Aorta (tissue), 5 donors: ENCODE measurements at regions of chr15 and their contacts with region 1.

Region 1: DNA sequence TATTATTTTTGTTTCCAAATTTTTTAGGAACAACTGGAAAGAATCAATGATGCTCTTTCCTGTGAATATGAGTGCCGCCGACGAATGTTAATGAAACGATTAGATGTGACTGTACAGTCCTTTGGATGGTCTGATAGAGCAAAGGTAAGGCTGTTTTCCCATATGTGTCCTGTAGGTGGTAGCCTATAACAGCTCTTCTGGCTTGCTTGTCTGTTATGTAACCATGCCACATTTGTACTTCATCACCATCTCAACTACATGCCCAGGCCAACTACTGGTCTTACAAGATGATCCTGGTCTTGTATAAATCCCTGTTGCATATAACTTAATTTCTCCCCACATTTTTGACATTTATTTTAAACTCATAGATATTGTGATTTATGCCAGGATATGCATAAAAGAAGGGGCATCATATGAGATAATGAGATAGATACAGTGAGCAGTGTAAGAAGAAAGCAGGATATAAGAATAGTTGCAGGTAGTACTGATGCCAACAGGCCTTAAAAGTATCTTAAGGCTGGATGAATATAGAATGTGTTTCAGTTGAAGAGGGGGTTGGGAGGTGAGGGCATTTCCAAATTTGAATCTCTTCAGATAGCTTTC is 20.3 kb downstream of the FAM98B start:
- DNase-seq: no peak
- ATAC-seq: peak; percentile 90
- H3K4me3 ChIP-seq: no peak overlapping the region
- H3K27ac ChIP-seq: no peak overlapping the region
- H3K4me1 ChIP-seq: no peaks in the 10 kb centered on the region
- H3K27me3 ChIP-seq: no peaks in the 10 kb centered on the region

Region 2: DNA sequence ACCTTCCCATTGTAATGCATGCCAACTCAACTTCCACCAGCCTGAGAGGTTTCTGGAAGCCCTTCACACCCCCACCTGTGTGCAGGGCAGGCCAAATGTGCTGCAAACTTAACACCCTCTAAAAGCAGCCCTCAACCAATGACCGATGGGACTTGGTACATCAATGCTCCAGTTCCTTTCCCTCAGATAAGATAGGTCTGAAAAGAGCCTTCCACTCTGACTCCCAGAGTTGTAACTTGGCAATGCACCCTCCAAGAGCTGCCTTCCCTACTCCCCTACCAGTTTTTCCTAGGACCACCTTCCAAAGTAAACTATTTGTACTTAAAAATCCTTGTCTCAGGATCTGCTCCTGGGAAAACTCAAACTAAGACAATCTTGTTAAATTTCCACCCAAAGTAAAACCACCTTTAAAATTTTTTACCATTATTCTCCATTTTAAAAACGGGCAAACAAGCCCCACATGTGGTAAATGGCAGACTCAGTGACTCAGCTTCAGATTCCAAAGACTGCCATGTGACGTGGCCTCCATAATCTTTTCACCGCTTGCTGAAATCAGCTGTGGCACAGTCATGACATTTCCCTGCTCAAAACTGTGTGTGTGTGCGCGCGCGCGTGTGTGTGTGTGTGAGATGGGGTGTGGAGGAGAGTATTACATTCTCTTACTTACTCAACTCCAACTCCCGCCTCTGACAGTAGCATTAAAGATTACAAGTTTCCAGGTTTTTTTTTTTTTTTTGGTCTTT is 73.2 kb after region 1 on chr15:
- intact Hi-C with region 1: loop called in 1 of 2 experiments (anchors 10 kb)
- DNase-seq: no peak
- ATAC-seq: no peak
- H3K4me3 ChIP-seq: no peak overlapping the region
- H3K27ac ChIP-seq: no peak overlapping the region
- H3K4me1 ChIP-seq: no peaks in the 10 kb centered on the region
- H3K27me3 ChIP-seq: no peaks in the 10 kb centered on the region

Region 3: DNA sequence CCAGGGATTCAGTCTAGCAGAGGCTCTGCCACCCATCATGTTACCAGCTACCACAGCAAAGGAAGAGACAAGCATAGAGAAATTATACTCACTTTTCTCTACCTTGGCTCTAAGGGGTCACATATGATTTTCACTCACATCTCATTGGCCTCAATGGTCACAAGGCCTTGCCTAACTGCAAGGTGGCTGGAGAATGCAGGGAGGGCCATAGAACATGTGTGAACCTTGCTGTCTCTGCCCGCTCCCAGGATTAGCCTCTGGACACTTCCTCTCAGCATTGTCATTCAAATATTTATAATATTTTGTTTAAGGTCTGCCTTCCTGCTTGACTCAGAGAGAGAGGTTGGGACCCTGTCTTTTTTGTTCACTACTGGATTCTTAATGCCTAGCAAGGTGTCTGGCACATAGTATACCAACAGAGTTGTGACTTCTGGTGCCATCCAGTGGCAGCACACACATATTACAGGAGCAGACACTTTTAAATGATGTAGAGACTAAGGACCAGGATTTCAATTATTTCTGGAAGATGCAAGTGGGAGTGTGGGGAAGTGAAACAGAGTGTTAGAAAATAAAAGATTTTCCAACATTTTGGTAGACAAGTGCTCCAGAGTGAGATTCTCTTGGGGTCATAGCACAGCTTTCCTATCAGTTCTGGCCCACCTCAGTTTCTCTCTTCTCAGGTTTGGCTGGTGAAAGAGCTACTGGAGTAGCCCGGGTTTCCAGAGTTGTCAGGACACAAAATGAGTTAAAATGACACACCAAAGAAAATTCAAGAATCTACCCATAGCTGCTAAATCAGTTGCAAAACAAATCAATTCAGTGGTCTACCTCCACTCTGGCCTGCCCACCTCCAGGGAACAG is 209.4 kb after region 1 on chr15:
- intact Hi-C with region 1: loop called in 1 of 2 experiments (anchors 5 kb)
- DNase-seq: peak in 1 of 2 donors; percentile 65
- ATAC-seq: peak; percentile 66
- H3K4me3 ChIP-seq: no peak overlapping the region
- H3K27ac ChIP-seq: no peak overlapping the region
- H3K4me1 ChIP-seq: no peaks in the 10 kb centered on the region
- H3K27me3 ChIP-seq: peaks cover 0 to 2% of the 10 kb centered on the region in 2 donors

Region 4: DNA sequence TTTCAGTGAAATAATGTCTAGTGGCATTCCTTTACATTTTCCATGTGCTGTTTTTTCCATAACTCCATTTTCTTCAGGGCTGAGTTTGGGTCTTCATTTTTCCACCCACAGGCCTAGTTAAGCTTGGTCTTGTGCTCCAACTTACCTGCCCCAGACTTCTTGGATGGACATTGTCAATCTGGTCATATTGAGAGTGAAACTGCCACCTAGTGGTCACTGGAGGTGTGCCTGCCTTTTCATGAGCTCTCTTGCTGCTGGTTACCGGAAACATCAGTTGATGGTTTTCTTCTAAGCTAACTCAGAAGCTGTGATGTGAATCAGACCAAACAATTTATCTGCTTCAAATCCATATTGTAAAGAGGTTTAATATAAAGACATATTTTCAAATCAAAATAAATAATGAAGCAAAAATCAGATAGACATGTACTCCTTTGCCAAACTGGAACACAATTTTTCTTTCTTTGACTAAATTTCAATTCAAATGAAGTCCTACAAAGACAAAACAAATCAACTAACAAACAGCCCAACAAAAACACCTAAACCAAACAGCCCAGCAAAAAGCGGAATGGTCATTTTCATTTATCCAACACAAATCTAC is 225.5 kb after region 1 on chr15:
- intact Hi-C with region 1: loop called (anchors 5 kb)
- DNase-seq: peak in 1 of 2 donors; percentile 56
- ATAC-seq: no peak
- H3K4me3 ChIP-seq: no peak overlapping the region
- H3K27ac ChIP-seq: no peak overlapping the region
- H3K4me1 ChIP-seq: no peaks in the 10 kb centered on the region
- H3K27me3 ChIP-seq: no peaks in the 10 kb centered on the region